ENCODE measurements at regions of chr6 and their contacts with region 1.

Region 1: DNA sequence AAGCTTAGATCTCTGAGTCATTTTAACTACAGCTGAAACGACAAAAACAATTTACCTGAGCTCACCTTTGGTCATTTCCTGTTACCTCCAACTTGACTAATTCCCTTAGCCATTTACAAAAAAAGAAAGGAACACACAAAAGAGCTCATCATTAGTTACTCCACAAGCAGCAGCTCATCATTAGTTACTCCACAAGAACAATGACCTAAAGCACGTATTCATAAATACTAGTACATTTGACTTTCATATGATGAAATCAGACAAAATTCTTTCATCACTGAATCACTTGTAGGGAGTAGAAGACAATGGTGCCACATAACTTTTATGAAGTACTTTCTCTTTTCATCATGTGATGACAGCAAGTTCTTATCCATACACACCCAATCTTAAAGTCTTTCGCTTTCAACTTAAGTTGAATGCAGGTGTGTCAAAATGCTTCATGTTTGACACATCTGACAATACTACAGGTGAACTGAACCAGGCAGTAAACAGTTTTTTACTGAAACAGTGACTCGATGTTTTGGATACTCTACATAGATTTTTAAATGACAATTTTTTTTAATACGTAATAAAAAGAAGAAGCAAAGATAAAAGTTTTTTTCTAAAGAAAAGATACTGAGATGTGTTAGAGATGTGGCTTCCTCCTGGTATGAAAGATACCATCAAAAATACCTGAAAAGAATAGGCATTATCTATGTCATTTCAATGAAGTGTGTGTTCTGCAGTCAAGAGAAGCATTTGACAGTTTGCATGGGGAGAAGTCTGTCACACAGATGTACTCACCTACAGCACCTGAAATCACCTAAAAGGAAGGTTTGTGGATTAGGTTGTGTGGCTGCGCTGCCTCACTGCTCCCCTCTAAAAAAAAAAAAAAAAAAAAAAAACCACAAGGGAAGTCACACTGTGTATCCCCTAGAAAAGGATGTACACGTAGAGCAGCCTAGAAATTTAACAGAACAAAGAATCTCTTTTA is 109.1 kb downstream of the PRDM1 start:
- DNase-seq: peak; percentile 51
- ATAC-seq: peak; percentile 79
- H3K4me3 Mint-ChIP-seq: peak overlapping the region; percentile 54
- H3K27ac Mint-ChIP-seq: peak overlapping the region; percentile 76
- H3K4me1 Mint-ChIP-seq: peaks cover 57% of the 10 kb centered on the region
- H3K27me3 Mint-ChIP-seq: no peaks in the 10 kb centered on the region

Region 2: DNA sequence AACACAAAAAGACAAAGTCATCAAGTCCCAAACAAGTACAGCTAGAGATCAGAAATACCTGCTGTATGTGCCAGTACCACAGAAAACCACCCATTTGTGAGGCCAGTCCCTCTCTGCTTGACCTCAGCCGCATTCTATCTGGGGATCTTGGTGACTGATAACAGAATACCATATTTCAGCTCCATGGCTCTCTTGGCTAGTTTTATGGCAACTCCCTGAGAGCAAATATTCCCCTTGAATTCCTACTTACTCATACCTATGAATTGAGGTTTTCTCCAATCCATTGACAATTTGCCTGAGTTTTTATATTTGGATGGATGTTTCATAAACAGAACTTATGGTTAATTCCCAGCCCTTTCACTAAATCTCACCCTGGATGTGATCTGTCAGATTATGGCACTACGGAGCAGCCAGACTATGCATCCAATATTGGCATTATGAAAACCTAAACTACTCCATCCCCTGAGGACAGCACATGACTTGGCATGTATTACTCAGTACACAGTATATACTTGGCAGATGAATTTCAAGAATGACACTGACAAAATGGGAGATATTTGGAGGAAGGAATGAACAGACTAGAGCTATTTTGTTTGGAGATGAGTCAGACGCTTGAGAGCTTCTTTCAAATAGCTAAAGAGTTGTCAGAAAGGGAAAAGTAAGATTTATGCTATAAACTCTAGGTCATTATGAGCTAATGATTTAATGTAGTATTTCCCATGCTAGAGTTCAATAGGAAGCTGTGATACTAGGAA is 13.4 kb before region 1 on chr6:
- CTCF ChIA-PET with region 1: interaction called, 10 read pairs
- POLR2A ChIA-PET with region 1: no interaction called
- DNase-seq: no peak
- ATAC-seq: no peak
- H3K4me3 Mint-ChIP-seq: no peak overlapping the region
- H3K27ac Mint-ChIP-seq: no peak overlapping the region
- H3K4me1 Mint-ChIP-seq: peaks cover 48% of the 10 kb centered on the region
- H3K27me3 Mint-ChIP-seq: no peaks in the 10 kb centered on the region

Region 3: DNA sequence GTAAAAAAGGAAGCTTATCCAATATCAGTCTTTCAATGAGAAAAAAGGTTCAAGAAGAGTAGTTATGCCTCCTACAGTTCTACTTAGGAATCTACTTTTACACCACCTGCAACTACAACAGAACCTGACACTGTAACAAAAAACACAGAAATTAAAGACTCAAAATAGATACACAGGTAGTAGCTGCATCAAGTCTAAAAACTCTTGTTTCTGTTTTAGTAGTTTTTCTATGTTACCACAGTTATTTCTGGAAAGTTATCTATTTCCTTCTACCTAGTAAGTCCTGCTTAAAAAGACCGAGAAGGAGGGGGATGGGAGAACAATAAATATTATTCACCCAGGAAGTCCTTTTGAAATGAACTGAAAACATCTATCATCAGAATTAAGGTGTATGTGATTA is 77.9 kb after region 1 on chr6:
- CTCF ChIA-PET with region 1: no interaction called
- POLR2A ChIA-PET with region 1: no interaction called
- DNase-seq: no peak
- ATAC-seq: no peak
- H3K4me3 Mint-ChIP-seq: no peak overlapping the region
- H3K27ac Mint-ChIP-seq: no peak overlapping the region
- H3K4me1 Mint-ChIP-seq: peaks cover 7% of the 10 kb centered on the region
- H3K27me3 Mint-ChIP-seq: no peaks in the 10 kb centered on the region

Measured in activated CD8-positive, alpha-beta T cell treated with anti-CD3 and anti-CD28 coated beads, Interleukin-2, amount 10 ng/mL, durations not matched to agents 7 days and 5 days (primary cell).